ENCODE measurements at regions of chr5 and their contacts with region 1.

Region 1: GRCh38 chr5:141260458-141261237 is 15.5 kb downstream of the PCDHB15 start:
- DNase-seq: no peak
- ATAC-seq: no peak
- H3K4me3 ChIP-seq: no peak overlapping the region
- H3K27ac ChIP-seq: no peak overlapping the region
- H3K4me1 ChIP-seq: no peaks in the 10 kb centered on the region
- H3K27me3 ChIP-seq: no peaks in the 10 kb centered on the region
- CTCF ChIP-seq: no peak
- POLR2A ChIP-seq: no peak
- RAD21 ChIP-seq: no peak

Region 2: GRCh38 chr5:141306630-141307029 is 46.0 kb after region 1 on chr5:
- CTCF ChIA-PET with region 1: no interaction called
- POLR2A ChIA-PET with region 1: no interaction called
- RAD21 ChIA-PET with region 1: no interaction called
- intact Hi-C with region 1: loop called (anchors 5 kb)
- DNase-seq: no peak
- ATAC-seq: no peak
- H3K4me3 ChIP-seq: no peak overlapping the region
- H3K27ac ChIP-seq: no peak overlapping the region
- H3K4me1 ChIP-seq: no peaks in the 10 kb centered on the region
- H3K27me3 ChIP-seq: no peaks in the 10 kb centered on the region
- CTCF ChIP-seq: no peak
- POLR2A ChIP-seq: no peak
- RAD21 ChIP-seq: no peak

Region 3: GRCh38 chr5:141382469-141383294 is 122.0 kb after region 1 on chr5 and contains the start of gene PCDHGA7:
- CTCF ChIA-PET with region 1: no interaction called
- POLR2A ChIA-PET with region 1: no interaction called
- RAD21 ChIA-PET with region 1: no interaction called
- intact Hi-C with region 1: no loop called
- DNase-seq: no peak
- ATAC-seq: no peak
- H3K4me3 ChIP-seq: no peak within 1 kb of the TSS
- H3K27ac ChIP-seq: no peak within 1 kb of the TSS
- H3K4me1 ChIP-seq: no peaks in the 10 kb centered on the region
- H3K27me3 ChIP-seq: no peaks in the 10 kb centered on the region
- CTCF ChIP-seq: no peak
- POLR2A ChIP-seq: no peak
- RAD21 ChIP-seq: no peak
- total RNA-seq, gene PCDHGA7: not detected

Region 4: DNA sequence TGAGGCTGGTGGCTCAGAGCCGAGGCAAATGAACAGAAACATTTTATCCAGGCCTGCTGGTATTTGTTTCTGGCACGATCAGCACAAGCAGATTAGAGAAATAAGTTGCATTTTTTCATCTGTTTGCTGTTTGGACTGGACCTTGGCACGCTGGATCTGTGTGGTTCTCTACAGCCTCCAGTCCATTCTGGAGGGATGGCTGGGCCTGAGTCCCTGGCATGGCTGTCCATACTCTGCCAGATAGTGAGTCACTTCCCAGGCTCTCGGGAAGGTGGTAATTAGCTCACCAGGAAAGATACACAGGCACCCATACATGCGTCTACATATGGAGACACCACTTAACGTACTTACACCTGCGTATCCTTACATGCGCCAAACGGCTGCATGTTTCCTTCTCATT is 985.6 kb after region 1 on chr5:
- CTCF ChIA-PET with region 1: no interaction called
- POLR2A ChIA-PET with region 1: no interaction called
- RAD21 ChIA-PET with region 1: no interaction called
- intact Hi-C with region 1: no loop called
- DNase-seq: no peak
- ATAC-seq: peak; percentile 49
- H3K4me3 ChIP-seq: no peak overlapping the region
- H3K27ac ChIP-seq: no peak overlapping the region
- H3K4me1 ChIP-seq: peaks cover 0 to 37% of the 10 kb centered on the region in 2 experiments; a peak in 3 of 4 replicates
- H3K27me3 ChIP-seq: no peaks in the 10 kb centered on the region
- CTCF ChIP-seq: no peak
- POLR2A ChIP-seq: no peak
- RAD21 ChIP-seq: no peak